HepG2 (cell line): ENCODE measurements at regions of chr1 and their contacts with region 1.

Region 1: GRCh38 chr1:245107776-245108645 is 46.8 kb upstream of the KIF26B start:
- DNase-seq: no peak
- ATAC-seq: peak; percentile 41
- H3K4me3 ChIP-seq: peak overlapping the region; percentile 39 to 68 (median 55); a peak in 4 of 6 replicates
- H3K27ac ChIP-seq: peak overlapping the region; percentile 77
- H3K4me1 ChIP-seq: peaks cover 53% of the 10 kb centered on the region
- H3K27me3 ChIP-seq: no peaks in the 10 kb centered on the region
- CTCF ChIP-seq: no peak
- EP300 ChIP-seq: no peak
- POLR2A ChIP-seq: no peak
- RAD21 ChIP-seq: no peak

Region 2: DNA sequence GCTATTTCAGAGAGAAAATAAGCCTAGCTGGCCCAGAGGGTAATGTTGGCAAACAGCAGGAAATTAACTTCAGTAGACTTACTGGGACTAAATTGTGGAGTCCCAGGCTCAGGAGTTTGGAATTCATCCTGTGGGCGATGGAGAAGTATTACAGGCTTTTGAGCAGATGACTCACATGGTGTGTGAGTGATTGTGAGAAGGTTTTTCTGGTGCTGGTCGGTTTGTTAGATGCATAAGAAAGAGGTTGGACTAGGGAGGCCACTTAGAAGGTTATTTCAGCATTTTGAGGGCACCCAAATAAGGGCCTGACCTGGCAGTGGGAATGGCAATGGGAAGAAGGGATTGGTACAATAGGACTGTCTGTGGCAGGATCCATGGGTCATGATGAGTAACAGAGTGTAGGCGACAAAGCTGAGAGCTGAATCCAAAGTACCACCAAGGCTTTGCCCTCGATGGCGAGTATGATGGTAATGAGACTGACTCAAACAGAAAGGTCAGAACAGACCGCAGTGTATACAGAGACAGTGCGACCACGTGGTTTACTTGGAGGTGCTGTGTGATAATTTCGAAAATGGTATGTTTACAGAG is 22.4 kb before region 1 on chr1:
- CTCF ChIA-PET with region 1: no interaction called
- POLR2A ChIA-PET with region 1: no interaction called
- in situ Hi-C with region 1: no loop called
- intact Hi-C with region 1: loop called (anchors 2 kb)
- DNase-seq: peak; percentile 71
- ATAC-seq: peak; percentile 90
- H3K4me3 ChIP-seq: no peak overlapping the region
- H3K27ac ChIP-seq: peak overlapping the region; percentile 11
- H3K4me1 ChIP-seq: peaks cover 34% of the 10 kb centered on the region
- H3K27me3 ChIP-seq: no peaks in the 10 kb centered on the region
- CTCF ChIP-seq: no peak
- EP300 ChIP-seq: 0 out of 4 replicates have a peak, but pooled peaks of 1 of the 2 experiments have one; percentile 33
- POLR2A ChIP-seq: no peak
- RAD21 ChIP-seq: no peak

Region 3: GRCh38 chr1:245091818-245092637 is 16.0 kb before region 1 on chr1:
- CTCF ChIA-PET with region 1: no interaction called
- POLR2A ChIA-PET with region 1: interaction called, 10 read pairs
- in situ Hi-C with region 1: no loop called
- intact Hi-C with region 1: loop called (anchors 2 kb)
- DNase-seq: peak; percentile 84
- ATAC-seq: peak; percentile 92
- H3K4me3 ChIP-seq: no peak overlapping the region
- H3K27ac ChIP-seq: peak overlapping the region; percentile 69
- H3K4me1 ChIP-seq: peaks cover 61% of the 10 kb centered on the region
- H3K27me3 ChIP-seq: no peaks in the 10 kb centered on the region
- CTCF ChIP-seq: no peak
- EP300 ChIP-seq: peak in 1 of 2 experiments; percentile 55; a peak in 3 of 4 replicates
- POLR2A ChIP-seq: 0 out of 4 replicates have a peak, but pooled peaks have one; percentile 22 to 29
- RAD21 ChIP-seq: no peak